A549 (cell line): ENCODE measurements at regions of chr10 and their contacts with region 1.

Region 1: DNA sequence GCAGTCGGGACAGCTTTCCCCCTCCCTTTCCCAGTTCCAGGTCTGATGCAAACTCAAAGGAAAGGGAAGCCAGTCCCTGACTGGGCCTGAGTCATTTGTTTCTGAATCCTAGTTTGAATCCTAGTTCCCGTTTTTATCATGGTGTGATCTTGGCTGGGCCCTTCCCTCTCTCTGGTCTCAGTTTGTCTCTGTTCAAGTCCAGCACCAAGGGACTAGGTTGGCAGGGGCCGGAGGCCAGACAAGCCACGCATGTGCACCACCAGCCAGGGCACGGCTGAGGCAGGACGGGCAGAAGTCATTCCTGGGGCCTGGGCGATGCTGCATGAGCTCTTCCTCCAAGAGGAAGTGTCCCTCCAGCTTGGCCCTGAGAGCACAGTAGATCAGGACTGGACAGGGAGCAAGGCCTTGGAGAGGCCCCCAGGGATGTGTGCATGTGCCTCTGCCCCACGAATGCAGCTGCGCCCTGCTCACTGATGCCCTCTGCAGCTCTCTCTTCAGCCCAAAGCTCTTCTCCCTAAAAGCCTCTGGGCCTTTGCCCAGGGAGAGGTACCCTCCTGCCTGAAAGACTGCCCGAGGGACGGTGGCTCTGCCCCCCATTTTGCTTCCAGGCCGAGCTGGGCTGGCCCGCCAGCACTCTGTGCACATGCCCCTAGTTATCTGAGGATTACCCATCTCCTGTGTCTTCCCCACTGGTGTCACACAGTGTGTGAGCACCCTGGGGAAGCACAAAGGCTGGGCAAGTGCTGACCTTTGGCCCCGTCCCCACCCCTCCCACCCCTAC is 86.7 kb downstream of the ZMIZ1 start:
- DNase-seq: no peak
- ATAC-seq: no peak
- H3K4me3 ChIP-seq: no peak overlapping the region
- H3K27ac ChIP-seq: peak overlapping the region; percentile 98 to 99
- H3K4me1 ChIP-seq: peaks cover 100% of the 10 kb centered on the region
- CTCF ChIP-seq: peak; percentile 11; the same call in 2 of the 3 replicates
- EP300 ChIP-seq: no peak
- POLR2A ChIP-seq: no peak
- RAD21 ChIP-seq: peak; percentile 30 to 34; a peak in 2 of 5 replicates

Region 2: DNA sequence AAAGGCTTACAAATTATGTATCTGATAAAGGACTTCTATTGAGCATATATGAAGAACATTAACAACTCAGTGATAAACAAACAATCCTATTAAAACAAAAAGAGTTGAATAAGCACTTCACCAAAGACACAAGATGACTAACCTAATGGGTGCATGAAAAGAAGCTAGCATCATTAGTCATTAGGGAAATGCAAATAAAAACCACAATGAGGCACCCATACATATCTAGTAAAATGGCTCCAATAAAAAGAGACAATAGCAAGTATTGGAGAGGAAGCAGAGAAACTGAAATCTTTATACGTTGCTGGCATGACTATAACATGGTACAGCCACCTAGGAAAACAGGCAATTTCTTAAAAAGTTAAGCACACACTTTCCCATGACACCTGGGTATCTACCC is 164.3 kb before region 1 on chr10:
- CTCF ChIA-PET with region 1: no interaction called
- POLR2A ChIA-PET with region 1: no interaction called
- DNase-seq: no peak
- ATAC-seq: no peak
- H3K4me3 ChIP-seq: no peak overlapping the region
- H3K27ac ChIP-seq: no peak overlapping the region
- H3K4me1 ChIP-seq: peaks cover 12% of the 10 kb centered on the region; the same call in 2 of the 3 replicates
- CTCF ChIP-seq: no peak
- EP300 ChIP-seq: no peak
- POLR2A ChIP-seq: no peak
- RAD21 ChIP-seq: no peak

Region 3: GRCh38 chr10:79068562-79069324 is 86.7 kb before region 1 on chr10 and contains the start of gene ZMIZ1:
- CTCF ChIA-PET with region 1: interaction called, 13 read pairs
- POLR2A ChIA-PET with region 1: no interaction called
- DNase-seq: peak; percentile 92 to 93
- ATAC-seq: peak; percentile 46 to 52
- H3K4me3 ChIP-seq: peak within 1 kb of the TSS; percentile 96
- H3K27ac ChIP-seq: peak within 1 kb of the TSS; percentile 91 to 98
- H3K4me1 ChIP-seq: peaks cover 36% of the 10 kb centered on the region
- CTCF ChIP-seq: no peak; the same call in 1 of the 3 replicates
- EP300 ChIP-seq: no peak
- POLR2A ChIP-seq: peak; percentile 62
- RAD21 ChIP-seq: peak in 1 of 2 experiments; percentile 38; a peak in 3 of 5 replicates
- polyA plus RNA-seq, gene ZMIZ1: 8.1 and 14.7 TPM in 2 replicates

Region 4: DNA sequence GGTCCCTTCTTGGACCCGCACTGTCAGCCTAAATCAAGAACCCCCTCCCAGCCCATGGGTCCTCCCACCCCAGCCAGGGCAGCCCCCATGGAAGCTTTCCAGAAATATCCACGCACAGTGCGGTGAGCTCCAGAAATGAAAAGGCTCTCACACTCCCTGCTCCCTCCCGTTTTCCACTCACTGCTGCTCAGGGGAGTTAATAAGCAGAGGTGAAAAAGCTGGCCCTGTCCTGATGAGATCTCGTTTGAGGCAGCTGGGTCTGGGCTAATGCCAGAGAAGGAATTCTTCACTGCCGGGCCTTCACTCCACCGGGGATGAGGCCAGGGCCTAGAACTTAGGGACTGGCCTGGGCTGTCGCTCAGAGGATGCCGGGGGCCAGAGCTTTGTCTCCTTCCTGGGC is 15.5 kb after region 1 on chr10:
- CTCF ChIA-PET with region 1: interaction called, 17 read pairs
- POLR2A ChIA-PET with region 1: no interaction called
- DNase-seq: no peak
- ATAC-seq: no peak
- H3K4me3 ChIP-seq: no peak overlapping the region
- H3K27ac ChIP-seq: peak overlapping the region in 1 of 2 experiments; percentile 17; a peak in 2 of 6 replicates
- H3K4me1 ChIP-seq: peaks cover 43% of the 10 kb centered on the region
- CTCF ChIP-seq: no peak
- EP300 ChIP-seq: no peak
- POLR2A ChIP-seq: no peak
- RAD21 ChIP-seq: no peak